ENCODE measurements at regions of chr9 and their contacts with region 1.

Region 1: DNA sequence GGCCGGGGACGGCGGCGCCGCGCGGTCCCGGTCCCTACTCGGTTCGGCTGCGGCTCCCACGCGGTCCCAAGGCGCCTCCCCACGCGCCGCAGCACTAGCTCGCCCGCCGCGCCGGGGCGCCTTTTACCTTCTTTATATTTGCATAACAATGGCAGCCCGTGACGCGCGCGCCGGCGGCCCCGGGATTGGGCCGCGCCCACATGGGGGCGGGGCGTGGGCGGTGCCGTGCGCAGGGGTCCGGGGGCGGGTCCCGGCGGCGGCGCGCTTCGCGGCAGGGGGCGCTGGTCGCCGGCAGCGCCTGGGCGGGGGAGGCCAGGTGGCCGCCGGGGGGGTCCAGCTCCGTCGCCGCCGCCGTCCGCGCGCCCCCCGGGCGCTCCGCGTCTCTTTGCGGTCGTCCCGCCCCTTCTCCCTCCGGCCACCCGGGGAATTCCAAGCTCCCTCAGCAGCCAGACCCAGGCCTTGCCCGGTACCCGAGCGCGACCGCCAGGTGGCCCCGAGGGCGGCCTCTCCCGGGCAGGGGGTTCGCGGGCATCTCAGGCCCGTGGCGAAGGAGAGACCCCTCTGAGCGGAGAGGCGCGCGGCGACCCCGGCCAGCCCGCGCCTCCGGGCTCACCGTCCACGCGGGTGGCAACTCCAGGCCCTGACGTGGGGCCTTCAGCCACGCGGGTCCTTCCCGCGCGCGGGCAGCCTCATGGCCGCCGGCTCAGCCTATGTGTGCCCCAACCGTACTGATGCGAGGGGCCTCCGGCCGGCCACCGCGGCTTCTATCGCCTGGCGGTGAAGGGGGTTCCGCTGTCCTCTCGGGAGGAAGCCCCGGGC is at the start of gene NRARP:
- DNase-seq: peak; percentile 93
- CTCF ChIP-seq: peak; percentile 46

Region 2: GRCh38 chr9:137277329-137278041 is 24.9 kb before region 1 on chr9 and contains the start of gene TOR4A:
- CTCF ChIA-PET with region 1: interaction called, 11 read pairs
- POLR2A ChIA-PET with region 1: interaction called, 7 read pairs
- DNase-seq: peak; percentile 93
- CTCF ChIP-seq: peak; percentile 37

Region 3: DNA sequence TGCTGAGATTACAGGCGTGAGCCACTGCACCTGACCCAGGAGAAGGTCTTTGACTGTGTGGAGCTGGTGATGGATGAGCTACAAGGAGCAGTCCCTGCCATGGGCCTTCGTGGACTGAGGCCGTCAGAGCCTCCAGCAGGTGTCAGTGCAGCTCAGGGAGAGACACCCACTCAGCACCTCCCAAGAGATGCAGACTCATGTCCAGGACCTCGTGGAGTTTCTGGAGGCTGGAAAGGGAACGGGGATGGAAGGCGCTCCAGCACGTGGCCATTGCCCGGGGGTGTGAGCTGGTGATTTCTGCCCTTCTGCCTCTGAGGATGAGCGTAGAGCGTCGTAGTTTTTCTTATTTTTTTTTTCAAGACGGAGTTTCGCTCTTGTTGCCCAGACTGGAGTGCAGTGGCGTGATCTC is 15.4 kb before region 1 on chr9:
- CTCF ChIA-PET with region 1: interaction called, 11 read pairs
- POLR2A ChIA-PET with region 1: interaction called, 3 read pairs
- DNase-seq: peak; percentile 62
- CTCF ChIP-seq: peak; percentile 41

Region 4: GRCh38 chr9:137316012-137316976 is 13.9 kb after region 1 on chr9:
- CTCF ChIA-PET with region 1: interaction called, 21 read pairs
- POLR2A ChIA-PET with region 1: interaction called, 11 read pairs
- DNase-seq: peak; percentile 91
- CTCF ChIP-seq: no peak

Region 5: DNA sequence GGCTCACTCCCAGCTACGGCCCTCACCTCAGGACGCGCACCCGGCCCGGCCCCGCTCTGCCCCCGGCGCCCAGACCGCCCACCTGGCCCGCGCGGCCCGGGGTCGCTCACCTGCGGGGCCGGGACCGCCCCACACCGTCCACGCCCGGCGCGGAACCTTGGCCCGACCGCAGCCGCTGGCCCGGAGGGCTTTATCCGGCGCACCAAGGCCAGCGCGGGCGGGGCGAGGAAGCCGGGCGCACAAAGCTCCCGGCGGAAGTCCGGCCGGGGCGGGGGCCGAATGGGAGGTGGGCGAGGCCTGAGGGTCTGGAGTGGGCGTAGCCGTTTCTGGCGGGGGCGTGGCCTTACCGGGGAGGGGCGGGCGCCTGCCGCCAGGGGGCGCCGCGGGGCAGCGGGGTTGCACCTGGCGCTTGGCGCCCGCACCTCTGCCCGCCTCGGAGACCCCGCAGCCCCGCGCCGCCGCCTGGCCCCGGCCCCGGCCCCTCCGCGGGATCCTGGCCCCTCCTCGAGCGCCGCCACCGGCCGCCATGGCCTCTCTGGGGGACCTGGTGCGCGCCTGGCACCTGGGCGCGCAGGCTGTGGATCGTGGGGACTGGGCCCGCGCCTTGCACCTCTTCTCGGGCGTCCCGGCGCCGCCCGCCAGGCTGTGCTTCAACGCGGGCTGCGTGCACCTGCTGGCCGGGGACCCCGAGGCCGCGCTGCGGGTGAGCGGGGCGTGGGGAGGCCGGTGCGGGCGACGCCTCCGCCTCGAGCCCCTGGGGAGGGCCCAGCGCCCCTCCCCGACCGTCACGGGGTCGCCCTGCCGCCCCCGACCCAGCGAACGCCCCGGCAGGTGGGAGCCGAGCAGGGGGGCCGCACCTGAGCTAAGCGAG is 120.9 kb after region 1 on chr9 and contains the starts of genes EXD3 and NOXA1:
- CTCF ChIA-PET with region 1: interaction called, 19 read pairs
- POLR2A ChIA-PET with region 1: interaction called, 3 read pairs
- DNase-seq: peak; percentile 99
- CTCF ChIP-seq: peak; percentile 65

Region 6: GRCh38 chr9:137445275-137445807 is 143.0 kb after region 1 on chr9:
- CTCF ChIA-PET with region 1: interaction called, 24 read pairs
- POLR2A ChIA-PET with region 1: interaction called, 5 read pairs
- DNase-seq: peak; percentile 87
- CTCF ChIP-seq: peak; percentile 84

Measured in GM10248 (cell line).